Right cardiac atrium (tissue), 5 donors: ENCODE measurements at regions of chr6 and their contacts with region 1.

Region 1: DNA sequence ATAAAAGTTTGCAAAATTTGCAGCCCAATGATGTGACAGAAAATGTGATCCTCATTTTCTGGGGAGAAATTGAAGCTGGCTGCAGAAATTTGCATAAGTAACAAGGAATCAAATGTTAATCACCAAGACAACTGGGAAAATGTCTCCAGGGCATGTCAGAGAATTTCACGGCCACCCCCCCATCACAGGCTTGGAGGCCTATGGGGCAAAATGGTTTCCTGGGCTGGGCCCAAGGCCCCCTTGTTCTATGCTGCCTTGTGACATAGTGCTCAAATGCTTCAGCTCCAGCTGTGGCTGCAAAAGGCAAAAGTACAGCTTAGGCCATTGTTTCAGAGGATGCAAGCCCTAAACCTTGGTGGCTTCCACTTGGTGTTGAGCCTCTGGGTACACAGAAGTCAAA is 1202.6 kb downstream of the EPHA7 start:
- DNase-seq: no peak
- ATAC-seq: no peak
- H3K4me3 ChIP-seq: no peak overlapping the region
- H3K27ac ChIP-seq: no peak overlapping the region
- H3K4me1 ChIP-seq: no peaks in the 10 kb centered on the region
- H3K27me3 ChIP-seq: no peaks in the 10 kb centered on the region

Region 2: DNA sequence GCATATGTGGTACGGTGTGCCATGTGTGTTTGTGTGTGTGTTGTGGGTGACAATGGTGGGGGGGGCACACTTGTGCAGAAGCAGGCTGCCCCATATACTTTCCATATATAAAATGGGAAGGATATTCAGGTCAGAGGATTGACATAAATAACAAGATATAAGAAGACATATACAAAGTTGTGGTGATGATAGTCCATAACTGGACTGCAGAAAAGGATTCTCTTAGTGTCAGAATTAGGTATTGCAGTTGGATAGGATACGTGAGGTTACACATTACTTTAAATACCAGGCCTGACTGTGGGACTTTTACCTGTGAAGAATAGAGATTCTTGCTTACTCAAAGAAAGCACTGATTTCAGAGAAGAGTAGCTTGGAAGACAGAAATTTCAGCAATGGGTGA is 57.7 kb before region 1 on chr6:
- intact Hi-C with region 1: no loop called
- DNase-seq: no peak
- ATAC-seq: no peak
- H3K4me3 ChIP-seq: no peak overlapping the region
- H3K27ac ChIP-seq: no peak overlapping the region
- H3K4me1 ChIP-seq: no peaks in the 10 kb centered on the region
- H3K27me3 ChIP-seq: no peaks in the 10 kb centered on the region

Region 3: GRCh38 chr6:92188016-92188415 is 28.7 kb before region 1 on chr6:
- intact Hi-C with region 1: loop called in 1 of 4 experiments (anchors 5 kb)
- DNase-seq: no peak
- ATAC-seq: no peak
- H3K4me3 ChIP-seq: no peak overlapping the region
- H3K27ac ChIP-seq: no peak overlapping the region
- H3K4me1 ChIP-seq: no peaks in the 10 kb centered on the region
- H3K27me3 ChIP-seq: no peaks in the 10 kb centered on the region